ENCODE measurements at regions of chr1 and their contacts with region 1.

Region 1: GRCh38 chr1:152440635-152441471 is 26.8 kb upstream of the CRNN start:
- DNase-seq: peak; percentile 48 to 87 (median 60)
- ATAC-seq: peak; percentile 99
- H3K4me3 ChIP-seq: no peak overlapping the region
- H3K4me3 Mint-ChIP-seq: no peak overlapping the region
- H3K27ac ChIP-seq: no peak overlapping the region
- H3K27ac Mint-ChIP-seq: no peak overlapping the region
- H3K4me1 ChIP-seq: peaks cover 7% of the 10 kb centered on the region
- H3K4me1 Mint-ChIP-seq: peaks cover 5% of the 10 kb centered on the region
- H3K27me3 ChIP-seq: peaks cover 0 to 4% of the 10 kb centered on the region in 2 experiments
- H3K27me3 Mint-ChIP-seq: peaks cover 21% of the 10 kb centered on the region
- CTCF ChIP-seq: peak; percentile 90

Region 2: GRCh38 chr1:152047730-152048402 is 393.0 kb before region 1 on chr1:
- CTCF ChIA-PET with region 1: no interaction called
- POLR2A ChIA-PET with region 1: no interaction called
- intact Hi-C with region 1: loop called (anchors 5 kb)
- DNase-seq: peak; percentile 65 to 95 (median 84)
- ATAC-seq: peak; percentile 89
- H3K4me3 ChIP-seq: peak overlapping the region; percentile 26
- H3K4me3 Mint-ChIP-seq: peak overlapping the region; percentile 72
- H3K27ac ChIP-seq: peak overlapping the region; percentile 94 to 96
- H3K27ac Mint-ChIP-seq: peak overlapping the region; percentile 96
- H3K4me1 ChIP-seq: peaks cover 39% of the 10 kb centered on the region
- H3K4me1 Mint-ChIP-seq: peaks cover 31% of the 10 kb centered on the region
- H3K27me3 ChIP-seq: peaks cover 0 to under 1% of the 10 kb centered on the region in 2 experiments
- H3K27me3 Mint-ChIP-seq: peaks cover 4% of the 10 kb centered on the region
- CTCF ChIP-seq: peak; percentile 52

Region 3: DNA sequence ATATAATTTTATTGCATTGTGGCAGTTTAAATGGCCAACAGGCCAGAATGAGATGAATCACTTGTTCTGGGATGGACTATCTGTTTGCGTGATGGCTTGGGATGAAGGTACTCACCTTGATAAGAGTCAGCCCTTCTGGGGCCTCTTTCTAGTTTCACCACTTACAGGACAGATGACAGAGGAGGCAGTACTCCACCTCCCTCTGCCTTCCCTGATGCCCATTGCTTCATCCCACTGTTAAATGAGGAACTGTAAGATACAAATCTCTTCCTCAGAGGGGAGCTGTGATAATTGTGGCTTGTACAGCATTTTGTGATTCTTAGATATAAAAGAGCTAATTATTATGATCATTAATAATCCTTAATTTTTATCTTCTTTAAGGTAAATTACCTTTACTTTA is 321.9 kb before region 1 on chr1:
- CTCF ChIA-PET with region 1: no interaction called
- POLR2A ChIA-PET with region 1: no interaction called
- intact Hi-C with region 1: no loop called
- DNase-seq: no peak
- ATAC-seq: no peak
- H3K4me3 ChIP-seq: no peak overlapping the region
- H3K4me3 Mint-ChIP-seq: no peak overlapping the region
- H3K27ac ChIP-seq: no peak overlapping the region
- H3K27ac Mint-ChIP-seq: no peak overlapping the region
- H3K4me1 ChIP-seq: no peaks in the 10 kb centered on the region
- H3K4me1 Mint-ChIP-seq: no peaks in the 10 kb centered on the region
- H3K27me3 ChIP-seq: peaks cover 18 to 68% of the 10 kb centered on the region in 2 experiments
- H3K27me3 Mint-ChIP-seq: peaks cover 63% of the 10 kb centered on the region
- CTCF ChIP-seq: no peak

Region 4: GRCh38 chr1:152347116-152347728 is 93.6 kb before region 1 on chr1:
- CTCF ChIA-PET with region 1: interaction called, 8 read pairs
- POLR2A ChIA-PET with region 1: no interaction called
- intact Hi-C with region 1: loop called in 1 of 2 experiments (anchors 5 kb)
- DNase-seq: peak in 13 of 14 experiments; percentile 1 to 77 (median 34)
- ATAC-seq: peak; percentile 57
- H3K4me3 ChIP-seq: no peak overlapping the region
- H3K4me3 Mint-ChIP-seq: no peak overlapping the region
- H3K27ac ChIP-seq: no peak overlapping the region
- H3K27ac Mint-ChIP-seq: no peak overlapping the region
- H3K4me1 ChIP-seq: no peaks in the 10 kb centered on the region
- H3K4me1 Mint-ChIP-seq: no peaks in the 10 kb centered on the region
- H3K27me3 ChIP-seq: peaks cover 0 to 11% of the 10 kb centered on the region in 2 experiments
- H3K27me3 Mint-ChIP-seq: peaks cover 29% of the 10 kb centered on the region
- CTCF ChIP-seq: peak; percentile 96

Region 5: DNA sequence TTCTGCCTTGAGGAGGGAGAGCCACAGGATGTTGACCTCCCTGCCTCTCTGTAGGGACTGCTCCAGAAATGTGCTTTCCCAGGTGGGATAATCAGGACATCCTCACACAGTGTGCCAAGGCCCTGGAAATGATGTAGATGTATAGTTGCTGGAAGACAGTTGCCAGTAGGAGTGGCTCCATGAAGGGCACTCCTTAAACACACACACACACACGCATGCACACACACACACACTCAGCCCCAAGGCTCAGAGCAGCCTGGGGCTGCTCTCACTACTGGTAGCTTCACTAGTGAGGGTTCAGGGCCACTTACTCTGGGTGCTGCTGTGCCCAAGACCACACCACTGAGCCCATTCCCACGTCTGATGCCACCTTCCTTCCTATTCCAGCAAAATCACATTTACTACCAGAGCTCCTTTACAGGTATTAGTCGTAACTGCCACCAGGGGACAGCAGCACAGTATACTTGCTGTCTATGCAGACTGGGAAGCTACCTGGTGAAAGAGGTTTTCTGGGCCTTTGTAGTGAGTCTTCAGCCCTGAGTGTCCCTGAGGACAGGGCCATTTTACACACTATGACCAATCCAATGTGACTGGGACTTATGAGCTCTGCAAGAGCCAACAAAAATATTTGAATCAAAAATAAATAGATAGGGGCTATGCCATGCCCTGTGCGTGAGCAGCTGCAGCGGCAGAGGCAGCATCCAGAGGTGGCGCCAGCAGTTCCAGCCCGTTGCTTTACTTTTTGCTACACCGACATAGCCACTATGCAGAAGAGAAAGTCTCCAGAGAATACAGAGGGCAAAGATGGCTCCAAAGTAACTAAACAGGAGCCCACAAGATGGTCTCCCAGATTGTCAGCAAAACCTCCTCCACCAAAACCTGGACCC is 41.8 kb before region 1 on chr1:
- CTCF ChIA-PET with region 1: interaction called, 5 read pairs
- POLR2A ChIA-PET with region 1: interaction called, 3 read pairs
- intact Hi-C with region 1: loop called in 1 of 2 experiments (anchors 5 kb)
- DNase-seq: peak in 5 of 14 experiments; percentile 3 to 48 (median 32)
- ATAC-seq: no peak
- H3K4me3 ChIP-seq: no peak overlapping the region
- H3K4me3 Mint-ChIP-seq: no peak overlapping the region
- H3K27ac ChIP-seq: no peak overlapping the region
- H3K27ac Mint-ChIP-seq: no peak overlapping the region
- H3K4me1 ChIP-seq: peaks cover 2% of the 10 kb centered on the region
- H3K4me1 Mint-ChIP-seq: peaks cover 13% of the 10 kb centered on the region
- H3K27me3 ChIP-seq: peaks cover 0 to 8% of the 10 kb centered on the region in 2 experiments
- H3K27me3 Mint-ChIP-seq: peaks cover 22% of the 10 kb centered on the region
- CTCF ChIP-seq: no peak